ENCODE measurements at regions of chr6 and their contacts with region 1.

Region 1: DNA sequence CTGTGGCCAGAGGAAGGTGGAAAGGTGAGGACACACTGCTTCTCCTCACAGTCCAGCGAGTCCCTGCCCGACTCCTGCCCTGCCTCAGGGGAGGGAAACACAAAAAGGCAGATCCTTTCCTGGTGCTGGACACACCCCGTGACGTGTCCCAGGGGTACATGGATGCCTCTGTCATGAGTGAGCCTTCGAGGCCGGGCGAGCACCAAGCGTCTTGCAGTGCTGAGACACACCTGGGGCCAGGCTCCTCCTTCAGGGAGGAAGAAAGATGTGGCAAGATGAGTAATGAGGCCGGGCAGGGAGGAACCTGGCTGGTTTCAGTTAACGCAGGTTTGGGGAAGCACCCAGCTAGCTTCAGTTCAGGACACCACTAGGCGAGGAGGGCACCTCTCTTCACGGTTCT is 215.1 kb downstream of the LY86 start:
- DNase-seq: peak; percentile 98
- H3K4me3 Mint-ChIP-seq: peak overlapping the region; percentile 27
- H3K27ac Mint-ChIP-seq: peak overlapping the region; percentile 84
- H3K4me1 Mint-ChIP-seq: peaks cover 39% of the 10 kb centered on the region
- H3K27me3 Mint-ChIP-seq: no peaks in the 10 kb centered on the region
- CTCF ChIP-seq: no peak

Region 2: DNA sequence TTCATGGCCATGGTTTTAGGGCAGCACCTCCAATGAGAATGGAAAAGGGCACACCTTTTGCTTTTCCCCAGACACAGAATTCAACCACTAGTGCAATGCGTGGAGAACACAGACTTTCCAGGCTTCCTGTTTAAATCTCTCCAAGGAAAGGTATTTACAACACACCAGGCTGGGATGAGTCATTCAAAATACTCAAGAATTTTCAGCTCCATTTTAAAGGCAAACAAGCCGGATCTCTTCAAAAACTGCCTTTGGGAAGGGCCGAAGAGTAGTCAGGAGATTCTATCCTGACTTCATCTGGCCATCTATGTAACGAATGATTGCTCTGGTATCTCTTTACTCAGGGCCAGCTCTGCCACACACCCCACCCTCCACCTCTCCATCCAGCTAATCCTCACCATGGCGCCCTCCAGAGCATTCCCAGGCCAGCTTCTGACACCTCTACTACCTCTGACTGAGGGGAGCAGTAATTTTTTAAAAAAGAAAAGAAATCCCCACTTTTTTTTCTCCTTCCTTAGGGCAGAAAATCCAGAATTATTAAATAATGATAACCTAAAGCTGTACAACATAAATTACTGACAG is 39.6 kb after region 1 on chr6:
- CTCF ChIA-PET with region 1: interaction called, 4 read pairs
- POLR2A ChIA-PET with region 1: interaction called, 11 read pairs
- intact Hi-C with region 1: no loop called
- DNase-seq: peak; percentile 53
- H3K4me3 Mint-ChIP-seq: no peak overlapping the region
- H3K27ac Mint-ChIP-seq: peak overlapping the region; percentile 61
- H3K4me1 Mint-ChIP-seq: peaks cover 33% of the 10 kb centered on the region
- H3K27me3 Mint-ChIP-seq: no peaks in the 10 kb centered on the region
- CTCF ChIP-seq: no peak

Region 3: DNA sequence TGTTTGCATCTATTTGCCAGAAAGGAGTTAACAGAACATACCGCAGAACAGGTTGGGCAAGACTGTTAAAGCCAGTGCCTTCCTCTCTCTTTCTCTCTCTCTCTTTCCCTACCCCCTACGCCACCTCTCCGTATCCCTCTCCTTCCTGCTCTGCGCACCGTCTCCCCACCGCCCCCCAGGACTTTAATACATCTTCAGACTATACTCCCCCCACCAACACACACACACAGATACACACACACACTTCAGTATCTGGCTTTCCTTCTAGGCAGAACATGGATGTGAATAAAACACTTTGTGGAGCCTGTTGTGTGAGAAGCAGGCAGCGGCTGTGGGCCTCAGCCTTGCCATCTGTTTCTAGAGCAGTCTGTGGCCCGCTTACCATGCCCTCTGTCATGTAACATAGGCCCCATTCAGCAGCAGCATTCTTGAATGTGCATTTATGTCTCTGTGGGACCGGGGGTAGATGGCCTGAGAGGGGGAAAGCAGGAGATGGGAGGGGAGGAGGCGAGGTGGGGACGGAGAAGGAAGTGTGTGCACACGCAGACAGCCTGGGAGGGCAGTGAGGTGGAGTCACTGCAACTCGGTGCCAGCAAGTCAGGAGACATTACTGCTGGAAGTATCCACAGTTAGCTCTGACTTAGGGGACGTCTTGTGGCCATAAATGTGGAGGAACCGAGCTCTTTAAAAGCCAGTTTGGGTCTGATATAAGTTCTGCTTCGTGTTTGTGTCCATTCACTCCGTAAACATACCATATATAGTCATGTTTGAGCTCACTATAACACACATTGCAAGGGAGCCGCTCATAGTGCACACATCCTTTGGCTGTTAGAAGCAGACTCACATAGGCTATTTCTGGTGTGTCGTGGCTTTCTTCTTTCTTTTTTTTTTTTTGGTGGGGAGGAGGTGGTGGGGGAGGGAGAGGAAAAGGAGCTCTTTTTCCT is 342.6 kb after region 1 on chr6:
- CTCF ChIA-PET with region 1: no interaction called
- POLR2A ChIA-PET with region 1: no interaction called
- intact Hi-C with region 1: loop called (anchors 5 kb)
- DNase-seq: no peak
- H3K4me3 Mint-ChIP-seq: peak overlapping the region; percentile 51
- H3K27ac Mint-ChIP-seq: peak overlapping the region; percentile 90
- H3K4me1 Mint-ChIP-seq: peaks cover 65% of the 10 kb centered on the region
- H3K27me3 Mint-ChIP-seq: no peaks in the 10 kb centered on the region
- CTCF ChIP-seq: no peak

Measured in MCF 10A (cell line).